ENCODE measurements at regions of chr2 and their contacts with region 1.

Region 1: DNA sequence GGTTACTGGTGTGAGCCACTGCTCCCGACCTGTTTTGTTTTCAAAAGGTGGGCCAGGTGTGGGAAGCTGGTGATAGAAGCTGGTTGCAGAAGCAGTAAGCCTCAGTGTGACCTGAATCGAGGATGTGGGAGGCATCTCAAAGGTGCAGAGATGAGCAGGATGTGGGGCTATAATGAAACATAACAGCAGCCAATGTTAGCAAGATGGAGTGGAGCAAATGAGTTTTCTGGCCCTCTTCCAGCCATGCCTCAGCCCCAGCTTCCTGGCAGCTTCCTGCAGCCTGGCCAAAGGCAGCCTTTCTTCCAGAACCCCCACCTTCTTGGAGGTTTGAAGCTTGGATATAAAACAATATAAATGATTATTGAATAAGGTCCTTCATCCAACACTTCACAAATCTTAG is 184.8 kb downstream of the NCK2 start:
- DNase-seq: peak in 8 of 9 experiments; percentile 26 to 81 (median 56)
- ATAC-seq: peak; percentile 79
- H3K4me3 ChIP-seq: no peak overlapping the region
- H3K4me3 Mint-ChIP-seq: peak overlapping the region; percentile 59
- H3K27ac ChIP-seq: peak overlapping the region; percentile 3 to 49
- H3K27ac Mint-ChIP-seq: peak overlapping the region; percentile 95
- H3K4me1 ChIP-seq: peaks cover 90% of the 10 kb centered on the region
- H3K4me1 Mint-ChIP-seq: peaks cover 88% of the 10 kb centered on the region
- H3K27me3 ChIP-seq: no peaks in the 10 kb centered on the region
- H3K27me3 Mint-ChIP-seq: no peaks in the 10 kb centered on the region
- CTCF ChIP-seq: no peak

Region 2: GRCh38 chr2:105896765-105897163 is 32.8 kb before region 1 on chr2:
- CTCF ChIA-PET with region 1: interaction called, 3 read pairs
- POLR2A ChIA-PET with region 1: interaction called, 3 read pairs
- intact Hi-C with region 1: loop called in 1 of 2 experiments (anchors 5 kb)
- DNase-seq: no peak
- ATAC-seq: no peak
- H3K4me3 ChIP-seq: no peak overlapping the region
- H3K4me3 Mint-ChIP-seq: no peak overlapping the region
- H3K27ac ChIP-seq: no peak overlapping the region
- H3K27ac Mint-ChIP-seq: peak overlapping the region; percentile 91
- H3K4me1 ChIP-seq: peaks cover 27% of the 10 kb centered on the region
- H3K4me1 Mint-ChIP-seq: peaks cover 55% of the 10 kb centered on the region
- H3K27me3 ChIP-seq: no peaks in the 10 kb centered on the region
- H3K27me3 Mint-ChIP-seq: no peaks in the 10 kb centered on the region
- CTCF ChIP-seq: no peak

Region 3: DNA sequence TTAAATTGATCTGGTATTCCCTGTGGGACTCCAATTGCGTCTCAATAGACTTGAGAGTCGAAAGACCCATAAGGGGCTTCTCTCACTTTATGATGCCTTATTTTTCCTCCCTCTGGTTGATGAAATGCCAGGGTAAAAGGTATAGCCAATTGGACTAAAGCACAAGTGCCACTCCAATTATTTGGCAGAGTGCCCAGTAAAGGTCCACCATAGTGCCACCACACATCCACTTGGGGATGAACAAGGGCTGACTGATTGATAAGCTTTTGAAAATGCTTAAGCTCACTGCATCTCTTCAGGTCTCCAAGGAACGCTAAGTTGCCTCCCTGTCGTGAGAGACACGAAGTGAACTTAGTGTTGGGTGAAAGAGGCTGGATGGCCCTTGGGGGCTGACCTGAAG is 52.9 kb after region 1 on chr2:
- CTCF ChIA-PET with region 1: no interaction called
- POLR2A ChIA-PET with region 1: no interaction called
- intact Hi-C with region 1: no loop called
- DNase-seq: no peak
- ATAC-seq: no peak
- H3K4me3 ChIP-seq: no peak overlapping the region
- H3K4me3 Mint-ChIP-seq: no peak overlapping the region
- H3K27ac ChIP-seq: no peak overlapping the region
- H3K27ac Mint-ChIP-seq: no peak overlapping the region
- H3K4me1 ChIP-seq: peaks cover 14% of the 10 kb centered on the region
- H3K4me1 Mint-ChIP-seq: peaks cover 27% of the 10 kb centered on the region
- H3K27me3 ChIP-seq: no peaks in the 10 kb centered on the region
- H3K27me3 Mint-ChIP-seq: no peaks in the 10 kb centered on the region
- CTCF ChIP-seq: no peak

Region 4: DNA sequence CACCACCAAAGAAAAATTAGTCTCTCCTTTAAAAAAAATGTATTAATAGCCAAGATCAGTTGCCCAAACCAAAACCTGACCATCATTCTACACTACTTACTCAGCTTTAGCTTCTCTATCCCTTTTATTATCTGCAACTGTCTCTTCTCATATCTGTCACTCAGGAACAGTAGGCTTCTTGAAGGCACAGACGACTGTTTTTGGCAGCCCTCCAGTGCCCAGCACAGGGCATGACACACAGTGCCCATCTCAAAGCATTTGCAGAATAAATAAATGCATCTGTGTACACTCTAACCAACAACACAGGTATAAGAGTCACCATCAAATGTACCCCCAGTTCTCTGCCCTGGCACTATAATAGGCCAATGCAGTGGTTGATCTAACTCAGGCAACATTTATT is 147.4 kb after region 1 on chr2:
- CTCF ChIA-PET with region 1: no interaction called
- POLR2A ChIA-PET with region 1: no interaction called
- intact Hi-C with region 1: loop called in 1 of 2 experiments (anchors 5 kb)
- DNase-seq: peak in 1 of 9 experiments; percentile 36
- ATAC-seq: no peak
- H3K4me3 ChIP-seq: no peak overlapping the region
- H3K4me3 Mint-ChIP-seq: no peak overlapping the region
- H3K27ac ChIP-seq: no peak overlapping the region
- H3K27ac Mint-ChIP-seq: peak overlapping the region; percentile 1
- H3K4me1 ChIP-seq: peaks cover 28% of the 10 kb centered on the region
- H3K4me1 Mint-ChIP-seq: peaks cover 45% of the 10 kb centered on the region
- H3K27me3 ChIP-seq: no peaks in the 10 kb centered on the region
- H3K27me3 Mint-ChIP-seq: no peaks in the 10 kb centered on the region
- CTCF ChIP-seq: no peak

Measured in CD8-positive, alpha-beta T cell (primary cell).